OCI-LY7 (cell line): ENCODE measurements at regions of chr7 and their contacts with region 1.

Region 1: DNA sequence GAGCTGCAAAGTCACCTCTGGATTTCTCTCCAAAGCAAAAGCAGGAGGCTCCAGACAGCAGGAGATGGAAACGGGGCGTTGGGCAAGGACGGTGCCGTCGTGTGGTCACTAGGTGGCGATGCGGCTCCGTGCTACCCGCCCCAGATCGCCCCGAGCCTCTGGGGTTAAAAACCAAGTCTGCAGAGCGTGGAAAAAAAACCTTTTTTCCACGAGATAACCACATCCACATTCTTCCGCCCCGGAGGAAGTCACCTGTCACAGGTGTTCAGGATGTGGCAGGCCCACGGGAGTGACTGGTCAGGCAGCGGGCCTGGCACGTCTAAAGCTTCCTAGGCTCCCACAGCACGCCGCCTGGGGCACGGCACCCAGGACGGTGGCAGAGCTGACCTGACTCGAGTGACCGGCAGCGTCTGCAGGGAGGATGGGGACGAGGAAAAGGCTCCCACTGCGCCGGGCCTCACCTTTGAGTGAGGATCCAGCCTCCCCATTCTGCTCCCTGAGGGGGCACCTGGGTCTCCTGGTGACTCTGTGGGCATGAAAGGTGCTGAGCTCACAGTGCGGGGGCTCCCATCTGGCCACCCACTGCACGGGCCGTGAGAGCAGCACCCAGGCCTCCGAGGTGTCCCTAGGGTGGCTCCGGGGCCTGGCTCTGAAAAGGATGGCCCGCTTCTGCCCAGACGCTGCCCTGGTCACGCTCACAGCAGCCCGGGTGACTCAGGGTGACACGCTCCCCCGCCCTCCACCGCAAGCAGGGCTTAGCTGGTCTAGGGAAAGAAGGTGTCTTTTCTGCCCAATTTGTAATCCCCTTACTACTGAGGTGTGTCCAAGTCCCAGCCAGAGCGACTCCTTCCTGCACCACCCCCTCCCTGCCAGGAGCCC is 71.3 kb upstream of the TNRC18 start:
- DNase-seq: peak; percentile 85
- H3K4me3 ChIP-seq: peak overlapping the region; percentile 10
- H3K27ac ChIP-seq: no peak overlapping the region
- H3K4me1 ChIP-seq: peaks cover 28% of the 10 kb centered on the region
- CTCF ChIP-seq: peak; percentile 93

Region 2: GRCh38 chr7:5539013-5539411 is 44.1 kb after region 1 on chr7:
- CTCF ChIA-PET with region 1: no interaction called
- POLR2A ChIA-PET with region 1: no interaction called
- intact Hi-C with region 1: no loop called
- DNase-seq: no peak
- H3K4me3 ChIP-seq: no peak overlapping the region
- H3K27ac ChIP-seq: no peak overlapping the region
- H3K4me1 ChIP-seq: peaks cover 9% of the 10 kb centered on the region
- CTCF ChIP-seq: no peak

Region 3: DNA sequence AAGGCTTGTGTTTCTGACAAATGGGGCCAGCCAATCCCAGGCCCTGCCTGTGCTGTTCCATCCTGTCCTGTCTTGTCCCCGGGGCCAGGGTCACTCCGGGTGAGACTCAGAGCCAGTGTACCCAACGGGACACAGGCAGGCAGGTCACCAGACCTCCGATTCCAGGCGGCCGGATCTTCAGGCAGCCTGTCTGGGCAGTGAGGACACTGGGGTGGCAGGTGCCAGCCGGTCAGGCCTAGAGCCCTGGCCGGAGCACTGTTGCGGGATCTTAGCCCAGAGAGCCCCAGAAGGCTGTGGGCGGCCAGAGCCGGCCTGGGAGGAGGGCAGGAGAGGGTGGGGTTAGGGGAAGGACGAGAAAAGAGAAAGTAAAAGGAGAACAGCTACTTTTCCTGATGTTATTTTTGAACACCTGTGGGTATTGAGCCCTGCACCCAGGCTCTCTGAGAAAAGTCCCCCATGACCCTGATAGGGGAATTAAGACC is 63.0 kb after region 1 on chr7:
- CTCF ChIA-PET with region 1: interaction called, 14 read pairs
- POLR2A ChIA-PET with region 1: interaction called, 8 read pairs
- intact Hi-C with region 1: loop called (anchors 1 kb)
- DNase-seq: peak; percentile 57
- H3K4me3 ChIP-seq: peak overlapping the region; percentile 66
- H3K27ac ChIP-seq: peak overlapping the region; percentile 81
- H3K4me1 ChIP-seq: peaks cover 55% of the 10 kb centered on the region
- CTCF ChIP-seq: no peak

Region 4: GRCh38 chr7:5665094-5666025 is 170.4 kb after region 1 on chr7:
- CTCF ChIA-PET with region 1: no interaction called
- POLR2A ChIA-PET with region 1: no interaction called
- intact Hi-C with region 1: loop called (anchors 1 kb)
- DNase-seq: peak; percentile 73
- H3K4me3 ChIP-seq: no peak overlapping the region
- H3K27ac ChIP-seq: no peak overlapping the region
- H3K4me1 ChIP-seq: peaks cover 25% of the 10 kb centered on the region
- CTCF ChIP-seq: peak; percentile 97

Region 5: GRCh38 chr7:5677538-5678294 is 182.8 kb after region 1 on chr7:
- CTCF ChIA-PET with region 1: interaction called, 3 read pairs
- POLR2A ChIA-PET with region 1: no interaction called
- intact Hi-C with region 1: loop called (anchors 1 kb)
- DNase-seq: peak; percentile 71
- H3K4me3 ChIP-seq: no peak overlapping the region
- H3K27ac ChIP-seq: no peak overlapping the region
- H3K4me1 ChIP-seq: no peaks in the 10 kb centered on the region
- CTCF ChIP-seq: peak; percentile 90

Region 6: GRCh38 chr7:5704534-5704922 is 209.6 kb after region 1 on chr7:
- CTCF ChIA-PET with region 1: no interaction called
- POLR2A ChIA-PET with region 1: no interaction called
- intact Hi-C with region 1: loop called (anchors 1 kb)
- DNase-seq: peak; percentile 74
- H3K4me3 ChIP-seq: no peak overlapping the region
- H3K27ac ChIP-seq: no peak overlapping the region
- H3K4me1 ChIP-seq: peaks cover 22% of the 10 kb centered on the region
- CTCF ChIP-seq: peak; percentile 98